ENCODE measurements at regions of chr19 and their contacts with region 1.

Region 1: DNA sequence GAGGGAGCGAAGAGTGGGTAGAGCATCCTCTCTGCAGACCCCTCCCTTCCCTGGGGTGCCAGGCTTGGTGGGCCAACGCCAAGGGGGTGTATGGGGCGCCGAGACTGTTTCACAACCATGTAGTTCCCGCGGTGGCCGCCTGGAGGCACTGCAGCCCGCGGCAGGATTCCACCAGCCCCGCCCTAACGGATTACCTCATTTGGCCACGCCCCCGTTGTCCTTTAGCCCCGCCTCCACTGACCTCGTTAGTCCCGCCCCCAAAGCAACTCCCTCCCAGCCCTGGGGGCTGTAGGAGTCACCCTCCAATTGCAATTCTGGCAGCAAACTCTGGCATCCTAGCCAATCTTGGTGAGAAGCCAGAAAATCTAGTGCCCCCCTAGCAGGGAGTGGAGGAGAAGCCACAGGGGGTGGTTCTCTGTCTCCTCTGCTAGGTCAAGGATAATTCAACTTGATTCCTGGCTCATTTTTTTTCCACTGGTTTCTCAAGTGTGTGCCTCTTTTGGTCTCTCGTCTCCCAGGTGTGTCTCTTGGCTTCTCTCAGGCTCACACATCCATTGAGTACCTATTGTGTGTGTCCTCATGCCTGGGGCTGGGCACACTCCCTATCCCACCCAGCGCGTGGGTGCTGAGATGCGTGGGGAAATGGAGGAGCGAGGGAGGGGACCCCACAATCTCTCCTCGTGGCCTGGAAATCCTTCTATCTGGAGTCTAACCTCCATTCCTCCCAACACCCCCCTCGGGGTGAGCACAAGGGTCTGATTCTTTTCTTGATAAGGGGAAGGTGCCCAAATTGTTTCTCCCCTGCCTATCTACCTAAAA is 2.0 kb downstream of the OLFM2 start:
- DNase-seq: peak; percentile 68 to 83
- H3K4me3 ChIP-seq: no peak overlapping the region
- H3K27ac ChIP-seq: no peak overlapping the region
- H3K4me1 ChIP-seq: peaks cover 13 to 40% (median 29%) of the 10 kb centered on the region in 4 donors
- H3K27me3 ChIP-seq: peaks cover 11 to 74% (median 53%) of the 10 kb centered on the region in 3 donors
- CTCF ChIP-seq: peak in 5 of 7 experiments; percentile 55 to 74 (median 67)
- EP300 ChIP-seq: no peak
- POLR2A ChIP-seq: no peak

Region 2: GRCh38 chr19:10027158-10027693 is 92.9 kb after region 1 on chr19:
- intact Hi-C with region 1: loop called (anchors 5 kb)
- DNase-seq: no peak
- H3K4me3 ChIP-seq: peak overlapping the region in 2 of 4 donors; percentile 5 to 27
- H3K27ac ChIP-seq: no peak overlapping the region
- H3K4me1 ChIP-seq: peaks cover 8 to 11% (median 10%) of the 10 kb centered on the region in 4 donors
- H3K27me3 ChIP-seq: peaks cover 0 to 40% (median 7%) of the 10 kb centered on the region in 3 donors
- CTCF ChIP-seq: no peak
- EP300 ChIP-seq: no peak
- POLR2A ChIP-seq: no peak

Measured in stomach (tissue), 19 donors.